Activated naive CD8-positive, alpha-beta T cell treated with anti-CD3 and anti-CD28 coated beads, Interleukin-2, amount 10 ng/mL, durations not matched to agents 7 days and 5 days (primary cell): ENCODE measurements at regions of chr6 and their contacts with region 1.

Region 1: GRCh38 chr6:31652925-31653718 is 661 bp upstream of the BAG6 start:
- DNase-seq: no peak
- ATAC-seq: peak; percentile 66
- H3K4me3 Mint-ChIP-seq: peak overlapping the region; percentile 94
- H3K27ac Mint-ChIP-seq: peak overlapping the region; percentile 99
- H3K4me1 Mint-ChIP-seq: peaks cover 46% of the 10 kb centered on the region
- H3K27me3 Mint-ChIP-seq: no peaks in the 10 kb centered on the region

Region 2: DNA sequence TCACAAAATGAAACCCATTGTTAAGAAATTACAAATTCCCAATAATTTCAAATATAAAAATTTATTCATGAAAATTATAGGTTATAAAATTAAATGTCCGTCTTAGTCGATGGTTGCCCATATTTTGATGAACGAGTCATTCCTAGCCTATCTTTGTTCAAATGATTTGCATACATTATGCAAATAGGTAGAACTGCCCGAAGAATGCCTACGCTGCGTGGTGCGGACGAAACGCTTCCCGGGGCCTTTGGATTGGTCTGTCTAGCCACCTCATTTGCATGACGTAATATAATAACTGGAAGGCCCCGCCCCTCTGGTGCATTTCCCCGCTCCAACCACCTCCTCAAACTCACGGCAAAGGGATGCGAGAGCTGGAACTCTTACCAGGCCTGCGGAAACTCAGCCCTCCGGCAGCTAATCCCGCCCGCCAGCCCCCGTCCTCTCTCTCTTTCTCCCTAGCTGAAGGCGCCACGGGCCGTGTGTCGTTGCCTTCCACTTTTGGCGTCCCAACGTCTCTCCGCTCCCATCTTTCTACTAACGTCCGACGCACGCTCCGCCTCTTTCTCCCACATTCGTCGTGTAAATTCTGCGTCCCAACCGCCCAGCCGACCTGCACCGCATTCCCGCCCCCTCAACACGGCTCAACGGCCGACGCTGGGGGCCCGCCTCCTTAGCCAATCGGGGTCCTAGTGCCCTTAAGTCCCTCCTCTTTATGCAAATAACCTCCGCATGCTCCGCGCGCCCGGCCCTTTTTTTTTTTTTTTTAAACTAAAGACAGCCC is 33.1 kb before region 1 on chr6:
- POLR2A ChIA-PET with region 1: interaction called, 34 read pairs
- DNase-seq: peak; percentile 94
- ATAC-seq: peak; percentile 88
- H3K4me3 Mint-ChIP-seq: peak overlapping the region; percentile 91
- H3K27ac Mint-ChIP-seq: peak overlapping the region; percentile 96
- H3K4me1 Mint-ChIP-seq: peaks cover 40% of the 10 kb centered on the region
- H3K27me3 Mint-ChIP-seq: no peaks in the 10 kb centered on the region

Region 3: DNA sequence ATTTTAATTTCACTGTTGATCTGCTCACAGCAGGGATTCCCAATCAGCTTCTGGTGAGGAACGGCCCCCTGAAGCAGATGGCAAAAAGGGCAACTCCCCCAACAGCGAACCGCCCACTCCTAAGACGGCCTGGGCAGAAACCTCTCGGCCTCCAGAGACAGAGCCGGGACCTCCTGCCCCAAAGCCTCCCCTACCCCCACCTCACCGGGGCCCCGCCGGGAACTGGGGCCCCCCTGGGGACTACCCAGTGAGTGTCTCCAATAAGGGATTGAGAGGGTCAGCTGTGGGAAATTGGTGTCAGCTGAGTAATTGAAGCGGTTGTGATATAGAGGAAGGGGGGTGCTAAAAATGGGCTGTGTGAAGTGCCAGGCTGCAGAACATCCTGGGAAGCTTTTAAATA is 26.2 kb before region 1 on chr6:
- POLR2A ChIA-PET with region 1: interaction called, 34 read pairs
- DNase-seq: no peak
- ATAC-seq: no peak
- H3K4me3 Mint-ChIP-seq: no peak overlapping the region
- H3K27ac Mint-ChIP-seq: no peak overlapping the region
- H3K4me1 Mint-ChIP-seq: peaks cover 14% of the 10 kb centered on the region
- H3K27me3 Mint-ChIP-seq: no peaks in the 10 kb centered on the region

Region 4: DNA sequence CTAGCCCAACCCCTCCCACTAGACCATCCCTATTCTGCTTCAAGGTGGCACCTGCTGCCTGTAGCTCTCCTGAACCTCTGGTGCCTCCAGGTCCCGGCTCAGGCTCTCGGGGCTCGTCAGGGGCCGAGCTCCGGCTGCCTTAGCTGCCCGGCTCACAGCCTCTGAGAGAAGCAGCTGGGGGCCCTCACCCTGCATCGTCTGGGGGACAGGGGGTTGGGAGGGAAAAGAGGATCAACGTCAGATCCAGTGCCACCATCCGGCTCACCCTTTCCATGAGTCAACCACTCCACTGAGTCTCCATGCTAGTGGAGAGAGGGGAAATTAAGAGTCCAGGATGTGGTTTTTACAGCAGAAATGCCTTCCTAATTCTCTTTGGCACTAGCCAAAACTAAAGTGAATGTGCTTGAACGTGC is 13.7 kb before region 1 on chr6:
- POLR2A ChIA-PET with region 1: interaction called, 10 read pairs
- DNase-seq: no peak
- ATAC-seq: no peak
- H3K4me3 Mint-ChIP-seq: no peak overlapping the region
- H3K27ac Mint-ChIP-seq: no peak overlapping the region
- H3K4me1 Mint-ChIP-seq: peaks cover 8% of the 10 kb centered on the region
- H3K27me3 Mint-ChIP-seq: no peaks in the 10 kb centered on the region

Region 5: GRCh38 chr6:31665501-31666336 is 12.6 kb after region 1 on chr6 and contains the start of gene CSNK2B:
- POLR2A ChIA-PET with region 1: interaction called, 138 read pairs
- DNase-seq: peak; percentile 95
- ATAC-seq: peak; percentile 86
- H3K4me3 Mint-ChIP-seq: peak within 1 kb of the TSS; percentile 96
- H3K27ac Mint-ChIP-seq: peak within 1 kb of the TSS; percentile 98
- H3K4me1 Mint-ChIP-seq: peaks cover 42% of the 10 kb centered on the region
- H3K27me3 Mint-ChIP-seq: no peaks in the 10 kb centered on the region
- total RNA-seq, gene CSNK2B: 206 to 216 TPM

Region 6: DNA sequence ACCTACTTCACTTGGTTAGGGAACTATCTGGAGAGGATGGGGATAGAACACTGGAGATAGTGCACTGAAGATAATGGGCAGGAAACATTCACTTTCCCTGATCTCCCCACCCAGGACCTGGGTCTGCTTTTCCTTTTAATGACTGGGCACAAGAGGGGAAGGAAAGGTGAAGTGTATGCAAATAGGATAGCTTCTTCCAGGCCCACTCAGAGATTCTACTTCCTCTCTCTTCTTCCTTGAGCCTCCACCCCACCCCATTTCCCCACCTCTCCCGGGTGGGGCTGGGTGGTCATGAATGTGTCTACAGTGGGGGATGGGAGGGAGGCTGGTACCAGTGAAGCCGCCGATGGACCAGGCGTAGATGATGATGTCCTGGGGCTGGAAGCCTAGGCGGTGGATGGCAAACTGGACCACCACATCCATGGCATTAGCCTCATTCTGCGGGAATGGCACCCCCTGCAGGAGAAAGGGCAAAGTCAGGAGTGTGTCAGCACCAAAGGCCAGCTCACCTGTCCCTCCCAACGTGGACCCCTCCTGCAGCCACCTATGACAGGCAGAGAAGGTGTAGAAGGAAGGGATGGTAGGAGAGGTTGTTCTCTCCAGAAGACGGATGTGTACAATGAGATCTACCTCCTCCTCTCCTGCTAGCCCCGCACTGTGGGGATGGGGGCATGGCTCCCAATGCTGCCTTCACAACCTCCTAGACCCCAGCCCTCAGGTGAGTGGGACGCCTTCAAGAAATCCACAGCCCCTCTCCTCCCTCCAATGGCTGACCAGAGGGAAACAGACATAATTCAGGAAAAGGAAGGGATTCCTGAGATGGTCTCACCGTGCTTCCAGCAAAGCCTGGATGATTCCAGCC is 36.4 kb after region 1 on chr6:
- POLR2A ChIA-PET with region 1: no interaction called
- DNase-seq: no peak
- ATAC-seq: peak; percentile 33
- H3K4me3 Mint-ChIP-seq: no peak overlapping the region
- H3K27ac Mint-ChIP-seq: peak overlapping the region; percentile 41
- H3K4me1 Mint-ChIP-seq: no peaks in the 10 kb centered on the region
- H3K27me3 Mint-ChIP-seq: no peaks in the 10 kb centered on the region

Region 7: GRCh38 chr6:31827286-31828079 is 174.4 kb after region 1 on chr6 and contains the start of gene HSPA1B:
- POLR2A ChIA-PET with region 1: interaction called, 10 read pairs
- DNase-seq: peak; percentile 89
- ATAC-seq: peak; percentile 82
- H3K4me3 Mint-ChIP-seq: peak within 1 kb of the TSS; percentile 92
- H3K27ac Mint-ChIP-seq: peak within 1 kb of the TSS; percentile 97
- H3K4me1 Mint-ChIP-seq: peaks cover 32% of the 10 kb centered on the region
- H3K27me3 Mint-ChIP-seq: no peaks in the 10 kb centered on the region
- total RNA-seq, gene HSPA1B: 49.0 to 55.7 TPM